ENCODE measurements at regions of chr2 and their contacts with region 1.

Region 1: DNA sequence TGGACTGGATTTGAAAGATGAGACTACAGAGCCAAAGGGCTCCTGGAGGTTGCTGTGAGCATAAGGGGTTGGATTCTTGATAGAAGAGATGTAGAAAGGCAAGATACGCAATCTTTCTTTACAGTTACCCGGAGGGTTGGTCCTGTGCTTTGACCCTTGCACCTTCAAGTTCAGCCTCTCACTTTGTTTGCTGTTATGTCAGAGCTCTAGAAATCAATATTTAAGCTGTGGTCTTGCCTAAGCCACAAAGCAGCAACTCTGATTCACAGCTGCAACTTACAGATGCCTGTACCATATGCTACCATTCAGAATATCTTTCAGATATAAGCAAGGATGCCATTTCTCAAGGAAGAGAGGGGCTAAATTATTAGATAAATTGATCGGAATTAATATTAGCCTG is 943.1 kb upstream of the LRRTM1 start:
- DNase-seq: peak; percentile 12
- ATAC-seq: no peak
- H3K4me3 ChIP-seq: no peak overlapping the region
- H3K27ac ChIP-seq: no peak overlapping the region
- H3K4me1 ChIP-seq: no peaks in the 10 kb centered on the region
- H3K27me3 ChIP-seq: no peaks in the 10 kb centered on the region
- CTCF ChIP-seq: no peak

Region 2: DNA sequence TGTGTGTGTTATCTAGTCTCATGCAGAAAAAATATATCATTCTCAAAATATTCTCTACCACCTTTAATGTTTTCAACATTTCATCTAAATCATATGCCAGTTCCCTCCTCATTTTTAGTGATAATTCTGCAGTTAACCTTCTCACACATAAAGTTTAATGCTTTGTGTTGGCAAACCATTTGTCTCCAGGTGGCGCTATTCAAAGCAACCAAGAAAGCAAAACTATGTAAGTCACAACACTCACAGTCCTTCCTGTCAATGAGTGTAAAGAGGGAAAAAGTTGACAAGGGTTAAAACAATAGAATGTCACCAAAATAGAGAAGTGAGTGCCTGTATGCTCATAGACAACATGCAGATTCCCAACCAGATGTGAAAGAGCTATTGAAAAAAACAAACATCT is 18.5 kb after region 1 on chr2:
- CTCF ChIA-PET with region 1: no interaction called
- POLR2A ChIA-PET with region 1: no interaction called
- intact Hi-C with region 1: no loop called
- DNase-seq: peak; percentile 53
- ATAC-seq: no peak
- H3K4me3 ChIP-seq: no peak overlapping the region
- H3K27ac ChIP-seq: no peak overlapping the region
- H3K4me1 ChIP-seq: peaks cover 9% of the 10 kb centered on the region; the same call in 1 of the 2 replicates
- H3K27me3 ChIP-seq: no peaks in the 10 kb centered on the region
- CTCF ChIP-seq: peak; percentile 78

Region 3: DNA sequence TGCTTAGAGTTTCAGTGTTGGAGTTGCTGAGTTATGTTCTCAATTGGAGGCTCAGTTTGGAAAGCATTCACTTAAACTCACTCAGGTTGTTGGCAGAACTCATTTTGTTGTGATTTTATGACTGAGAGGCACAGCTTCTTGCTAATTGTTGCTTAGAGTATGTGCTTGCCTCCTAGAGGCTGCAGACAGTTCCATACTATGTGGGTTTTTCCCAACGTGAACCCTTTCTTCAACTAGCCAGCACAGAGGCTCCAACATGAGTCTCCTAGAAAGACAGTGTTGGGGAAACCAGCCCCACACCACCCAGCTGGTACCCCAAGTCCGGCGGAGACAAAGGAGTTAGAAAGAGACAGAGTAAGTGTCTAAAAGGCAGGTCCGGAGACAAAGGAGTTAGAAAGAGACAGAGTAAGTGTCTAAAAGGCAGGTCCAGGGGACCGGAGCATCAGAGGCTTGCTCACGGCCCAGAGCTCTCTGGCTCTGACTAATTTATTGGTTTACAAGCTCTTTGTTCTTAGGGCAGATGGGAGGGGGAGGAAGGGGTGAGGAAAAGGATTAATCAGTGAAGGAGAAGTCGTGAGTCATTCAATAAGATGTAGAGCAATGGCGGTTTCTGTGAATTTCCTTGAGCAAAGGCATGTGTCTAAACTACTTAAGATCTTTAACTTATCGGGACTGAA is 56.6 kb after region 1 on chr2:
- CTCF ChIA-PET with region 1: no interaction called
- POLR2A ChIA-PET with region 1: no interaction called
- intact Hi-C with region 1: no loop called
- DNase-seq: peak; percentile 78
- ATAC-seq: peak; percentile 83
- H3K4me3 ChIP-seq: no peak overlapping the region
- H3K27ac ChIP-seq: peak overlapping the region; percentile 51
- H3K4me1 ChIP-seq: peaks cover 13% of the 10 kb centered on the region; the same call in 1 of the 2 replicates
- H3K27me3 ChIP-seq: no peaks in the 10 kb centered on the region
- CTCF ChIP-seq: no peak

Region 4: DNA sequence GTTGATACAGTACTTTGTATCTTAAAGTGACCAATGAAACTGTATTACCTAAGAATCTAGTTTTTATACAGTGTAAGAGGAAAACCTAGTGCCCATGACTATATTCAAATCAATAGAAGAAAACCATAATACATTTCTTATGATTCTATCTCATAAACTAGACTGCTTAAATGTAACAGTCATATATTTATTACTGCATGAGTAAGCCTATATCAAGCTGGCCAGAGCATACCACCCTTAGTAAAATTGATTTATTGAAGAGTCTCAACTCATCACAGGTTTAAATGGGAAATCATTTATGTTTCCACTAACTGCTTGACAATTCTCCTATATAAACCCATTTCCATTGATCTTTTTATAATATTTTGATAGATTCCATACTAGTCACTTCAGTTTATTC is 116.2 kb after region 1 on chr2:
- CTCF ChIA-PET with region 1: no interaction called
- POLR2A ChIA-PET with region 1: no interaction called
- intact Hi-C with region 1: loop called (anchors 10 kb)
- DNase-seq: peak; percentile 27
- ATAC-seq: peak; percentile 86
- H3K4me3 ChIP-seq: no peak overlapping the region
- H3K27ac ChIP-seq: no peak overlapping the region
- H3K4me1 ChIP-seq: no peaks in the 10 kb centered on the region
- H3K27me3 ChIP-seq: no peaks in the 10 kb centered on the region
- CTCF ChIP-seq: no peak

Measured in PC-3 (cell line).